Activated naive CD8-positive, alpha-beta T cell treated with anti-CD3 and anti-CD28 coated beads, Interleukin-2, amount 10 ng/mL, durations not matched to agents 7 days and 5 days (primary cell): ENCODE measurements at regions of chr14 and their contacts with region 1.

Region 1: DNA sequence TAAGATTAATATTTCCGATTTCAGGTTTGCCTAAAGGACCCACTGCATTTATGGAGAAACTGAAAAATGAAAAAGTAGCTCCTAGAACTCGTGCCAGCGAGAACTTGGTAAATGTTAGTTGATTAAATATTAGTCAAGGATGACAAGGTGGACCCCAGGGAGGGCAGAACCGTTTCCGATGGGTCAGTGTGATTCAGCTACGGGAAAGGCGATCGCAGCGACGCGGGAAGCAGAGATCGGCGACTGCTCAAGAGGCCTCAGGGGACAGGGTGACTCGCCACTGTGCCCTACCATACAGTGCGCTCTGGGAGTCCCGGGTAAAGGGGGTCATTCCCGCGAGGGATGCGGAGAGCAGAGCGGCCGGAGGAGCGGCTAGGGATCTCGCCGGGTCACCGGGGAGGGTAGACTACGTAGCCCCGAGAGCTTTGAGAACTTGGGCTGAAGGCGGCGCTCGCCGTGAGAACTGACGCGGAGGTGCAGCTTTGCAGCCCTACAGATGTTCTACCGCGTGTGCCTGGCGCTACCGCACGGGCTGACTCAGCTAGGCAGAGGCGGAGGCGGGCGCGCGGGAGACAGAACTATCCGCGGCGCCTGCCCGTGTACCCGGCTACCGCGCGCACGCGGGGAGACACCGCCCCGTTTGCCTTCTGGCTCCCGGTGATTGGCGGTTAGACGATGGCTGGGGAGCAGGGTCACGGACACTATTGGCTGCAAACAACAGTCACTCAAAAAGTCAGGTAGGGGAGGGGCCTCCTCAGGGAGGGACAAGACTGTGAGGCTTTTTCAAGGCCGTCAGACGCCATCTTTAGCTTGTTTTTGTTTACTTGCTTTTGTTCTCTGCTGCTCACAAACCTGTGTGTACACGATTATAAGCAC is 3.2 kb downstream of the C14orf93 start:
- DNase-seq: peak; percentile 94
- ATAC-seq: peak; percentile 98
- H3K4me3 Mint-ChIP-seq: peak overlapping the region; percentile 95
- H3K27ac Mint-ChIP-seq: peak overlapping the region; percentile 96
- H3K4me1 Mint-ChIP-seq: peaks cover 34% of the 10 kb centered on the region
- H3K27me3 Mint-ChIP-seq: no peaks in the 10 kb centered on the region

Region 2: GRCh38 chr14:22177870-22178269 is 828.9 kb before region 1 on chr14:
- POLR2A ChIA-PET with region 1: no interaction called
- DNase-seq: no peak
- ATAC-seq: peak; percentile 47
- H3K4me3 Mint-ChIP-seq: peak overlapping the region; percentile 49
- H3K27ac Mint-ChIP-seq: peak overlapping the region; percentile 30
- H3K4me1 Mint-ChIP-seq: no peaks in the 10 kb centered on the region
- H3K27me3 Mint-ChIP-seq: no peaks in the 10 kb centered on the region

Region 3: GRCh38 chr14:22918804-22919600 is 87.8 kb before region 1 on chr14 and contains the start of gene RBM23:
- POLR2A ChIA-PET with region 1: interaction called, 16 read pairs
- DNase-seq: peak; percentile 98
- ATAC-seq: peak; percentile 89
- H3K4me3 Mint-ChIP-seq: peak within 1 kb of the TSS; percentile 94
- H3K27ac Mint-ChIP-seq: peak within 1 kb of the TSS; percentile 99
- H3K4me1 Mint-ChIP-seq: peaks cover 24% of the 10 kb centered on the region
- H3K27me3 Mint-ChIP-seq: no peaks in the 10 kb centered on the region
- total RNA-seq, gene RBM23: 91.7 to 98.0 TPM

Region 4: GRCh38 chr14:22955702-22956569 is 50.8 kb before region 1 on chr14:
- POLR2A ChIA-PET with region 1: interaction called, 14 read pairs
- DNase-seq: no peak
- ATAC-seq: no peak
- H3K4me3 Mint-ChIP-seq: peak overlapping the region; percentile 89
- H3K27ac Mint-ChIP-seq: peak overlapping the region; percentile 90
- H3K4me1 Mint-ChIP-seq: peaks cover 17% of the 10 kb centered on the region
- H3K27me3 Mint-ChIP-seq: peaks cover 3% of the 10 kb centered on the region

Region 5: GRCh38 chr14:23020143-23021128 is 13.7 kb after region 1 on chr14:
- POLR2A ChIA-PET with region 1: interaction called, 11 read pairs
- DNase-seq: no peak
- ATAC-seq: no peak
- H3K4me3 Mint-ChIP-seq: no peak overlapping the region
- H3K27ac Mint-ChIP-seq: no peak overlapping the region
- H3K4me1 Mint-ChIP-seq: peaks cover 14% of the 10 kb centered on the region
- H3K27me3 Mint-ChIP-seq: no peaks in the 10 kb centered on the region

Region 6: DNA sequence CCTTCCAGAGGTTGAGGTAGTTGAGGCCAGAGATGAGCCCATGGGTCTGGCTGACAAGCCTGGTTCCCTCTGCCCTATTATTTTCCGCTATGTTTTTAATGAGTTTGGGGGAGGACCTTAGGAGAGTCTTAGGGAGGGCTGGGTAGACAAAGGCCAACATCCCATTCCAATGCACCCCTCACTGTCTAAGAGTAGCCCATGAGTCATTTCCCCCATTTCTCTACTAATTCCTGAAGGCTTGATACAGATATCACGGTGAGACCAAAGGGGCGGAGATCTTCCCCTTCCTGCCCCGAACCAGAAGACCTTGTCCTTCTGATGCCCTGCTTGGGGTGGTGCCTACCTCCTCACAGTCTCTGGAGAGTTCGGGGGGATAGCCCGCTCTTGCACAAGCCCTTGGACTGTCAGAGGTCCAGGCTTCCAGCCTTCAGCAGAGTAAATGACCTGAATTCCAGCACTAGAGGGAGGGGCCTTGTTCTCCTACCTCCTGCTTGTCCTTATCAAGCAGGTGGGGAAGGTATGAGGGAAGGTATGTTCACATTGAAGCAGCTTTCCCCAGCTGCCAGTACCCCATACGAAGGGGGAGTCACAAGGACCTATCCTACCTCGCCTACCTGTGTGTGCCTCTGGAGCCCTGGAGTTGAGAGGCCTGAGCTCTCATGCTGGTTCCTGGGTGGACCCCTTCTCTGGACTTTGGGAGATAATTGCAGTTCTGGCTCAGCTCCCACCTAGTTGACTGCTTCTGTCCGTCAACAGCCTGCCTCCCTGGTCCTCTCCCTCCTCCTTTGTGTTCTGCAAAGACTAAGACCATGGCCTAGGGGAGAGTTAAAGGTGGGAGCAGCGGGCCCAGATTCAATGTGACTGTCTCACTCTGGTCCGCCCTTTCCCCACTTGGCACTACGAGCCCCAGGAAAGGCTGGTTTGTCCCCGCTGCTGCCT is 38.9 kb after region 1 on chr14:
- POLR2A ChIA-PET with region 1: no interaction called
- DNase-seq: no peak
- ATAC-seq: no peak
- H3K4me3 Mint-ChIP-seq: no peak overlapping the region
- H3K27ac Mint-ChIP-seq: no peak overlapping the region
- H3K4me1 Mint-ChIP-seq: no peaks in the 10 kb centered on the region
- H3K27me3 Mint-ChIP-seq: no peaks in the 10 kb centered on the region

Region 7: GRCh38 chr14:23057757-23058653 is 51.2 kb after region 1 on chr14:
- POLR2A ChIA-PET with region 1: interaction called, 12 read pairs
- DNase-seq: peak; percentile 90
- ATAC-seq: peak; percentile 71
- H3K4me3 Mint-ChIP-seq: peak overlapping the region; percentile 81
- H3K27ac Mint-ChIP-seq: no peak overlapping the region
- H3K4me1 Mint-ChIP-seq: peaks cover 16% of the 10 kb centered on the region
- H3K27me3 Mint-ChIP-seq: peaks cover 8% of the 10 kb centered on the region

Region 8: DNA sequence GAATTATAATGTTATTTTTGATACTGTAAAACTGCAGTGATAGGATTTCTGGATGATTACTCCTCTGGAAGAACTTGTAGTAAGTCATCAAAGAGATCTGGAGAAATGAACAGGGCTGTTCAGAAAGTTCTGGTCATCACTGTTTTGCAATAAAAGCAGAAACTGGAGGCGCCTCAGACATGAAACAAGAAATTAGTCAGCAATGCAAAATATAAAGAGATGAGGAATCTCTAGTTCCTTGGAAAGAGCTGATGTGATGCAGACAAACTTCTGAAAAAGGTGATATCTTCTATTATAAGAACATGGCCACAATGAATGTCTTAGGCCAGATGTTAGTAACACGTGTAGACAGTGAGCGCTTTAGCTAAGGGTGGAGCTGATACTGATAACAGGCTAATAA is 78.7 kb after region 1 on chr14:
- POLR2A ChIA-PET with region 1: no interaction called
- DNase-seq: no peak
- ATAC-seq: no peak
- H3K4me3 Mint-ChIP-seq: no peak overlapping the region
- H3K27ac Mint-ChIP-seq: no peak overlapping the region
- H3K4me1 Mint-ChIP-seq: peaks cover 7% of the 10 kb centered on the region
- H3K27me3 Mint-ChIP-seq: no peaks in the 10 kb centered on the region